ENCODE measurements at regions of chr11 and their contacts with region 1.

Region 1: GRCh38 chr11:128323381-128323780 is 264.0 kb downstream of the ETS1 start:
- DNase-seq: peak in 3 of 5 donors; percentile 37 to 55 (median 51)
- H3K4me3 ChIP-seq: peak overlapping the region; percentile 26
- H3K4me3 Mint-ChIP-seq: peak overlapping the region; percentile 34 to 77 (median 68)
- H3K27ac ChIP-seq: peak overlapping the region; percentile 83
- H3K27ac Mint-ChIP-seq: peak overlapping the region; percentile 88 to 99 (median 96)
- H3K4me1 ChIP-seq: peaks cover 95% of the 10 kb centered on the region
- H3K4me1 Mint-ChIP-seq: peaks cover 82 to 92% (median 88%) of the 10 kb centered on the region in 3 donors
- H3K27me3 ChIP-seq: no peaks in the 10 kb centered on the region
- H3K27me3 Mint-ChIP-seq: no peaks in the 10 kb centered on the region

Region 2: DNA sequence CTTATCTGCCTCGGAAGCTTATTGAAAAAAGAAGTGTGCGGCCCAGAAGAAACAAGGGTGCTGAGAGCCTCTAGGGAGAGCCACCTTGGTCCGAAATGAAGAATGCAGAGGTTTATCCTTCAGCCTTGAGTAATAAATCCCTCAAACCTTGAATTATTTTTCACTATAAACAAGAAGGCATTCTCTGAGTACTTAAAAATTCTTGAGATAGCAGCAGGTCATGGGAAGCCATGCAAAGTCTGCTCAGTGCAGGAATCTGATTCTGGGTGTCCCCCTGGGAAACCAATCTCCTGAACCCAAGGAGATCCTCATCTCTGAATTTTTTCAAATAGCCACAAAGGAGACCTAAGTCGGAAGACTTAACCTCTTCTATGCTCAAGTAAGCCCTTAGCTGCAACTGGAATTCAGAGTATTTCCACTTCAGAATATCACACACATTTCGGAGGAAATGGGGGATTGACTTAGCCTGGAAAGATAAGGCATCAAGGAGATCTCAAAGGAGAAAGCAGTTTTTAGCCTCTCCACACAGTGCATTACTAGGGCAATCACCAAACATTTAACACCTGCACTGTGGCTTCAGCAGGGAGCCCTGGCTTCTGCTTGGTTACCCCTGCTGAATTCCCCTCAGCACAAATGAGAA is 101.0 kb before region 1 on chr11:
- CTCF ChIA-PET with region 1: no interaction called
- POLR2A ChIA-PET with region 1: no interaction called
- DNase-seq: no peak
- H3K4me3 ChIP-seq: no peak overlapping the region
- H3K4me3 Mint-ChIP-seq: no peak overlapping the region
- H3K27ac ChIP-seq: no peak overlapping the region
- H3K27ac Mint-ChIP-seq: no peak overlapping the region
- H3K4me1 ChIP-seq: no peaks in the 10 kb centered on the region
- H3K4me1 Mint-ChIP-seq: peaks cover 4 to 9% (median 8%) of the 10 kb centered on the region in 3 donors
- H3K27me3 ChIP-seq: no peaks in the 10 kb centered on the region
- H3K27me3 Mint-ChIP-seq: no peaks in the 10 kb centered on the region

Region 3: DNA sequence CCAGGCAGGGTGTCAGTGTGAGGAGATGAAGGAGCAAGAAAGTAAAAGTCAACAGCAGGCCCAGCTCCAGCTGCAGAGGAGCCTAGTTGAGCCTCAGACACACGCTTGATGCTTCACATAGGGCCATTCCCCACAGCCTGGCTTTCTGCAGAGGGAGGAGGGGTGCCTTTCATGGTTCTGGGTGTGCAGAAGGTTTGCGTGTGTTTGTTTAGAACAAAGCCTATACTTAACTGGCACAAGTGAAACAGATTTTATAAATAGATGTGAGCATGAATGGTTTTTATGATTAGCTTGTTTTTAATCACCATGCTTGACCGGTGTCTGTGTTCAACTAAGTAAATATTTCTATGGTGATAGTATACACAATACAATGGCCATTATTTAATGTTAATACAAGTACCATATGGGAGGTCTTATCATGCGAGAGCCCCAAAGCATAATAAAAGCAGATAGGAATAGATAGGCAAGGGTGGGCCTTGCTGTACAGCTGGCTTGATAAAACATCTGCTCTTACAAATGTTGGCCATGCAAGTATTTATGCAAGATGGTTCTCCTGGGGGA is 26.2 kb before region 1 on chr11:
- CTCF ChIA-PET with region 1: interaction called, 27 read pairs
- POLR2A ChIA-PET with region 1: interaction called, 10 read pairs
- DNase-seq: peak in 2 of 5 donors; percentile 45
- H3K4me3 ChIP-seq: no peak overlapping the region
- H3K4me3 Mint-ChIP-seq: peak overlapping the region in 4 of 7 donors; percentile 2 to 59 (median 28)
- H3K27ac ChIP-seq: no peak overlapping the region
- H3K27ac Mint-ChIP-seq: peak overlapping the region; percentile 47 to 99 (median 95)
- H3K4me1 ChIP-seq: peaks cover 98% of the 10 kb centered on the region
- H3K4me1 Mint-ChIP-seq: peaks cover 82 to 100% (median 100%) of the 10 kb centered on the region in 3 donors
- H3K27me3 ChIP-seq: no peaks in the 10 kb centered on the region
- H3K27me3 Mint-ChIP-seq: no peaks in the 10 kb centered on the region

Region 4: GRCh38 chr11:128308794-128309193 is 14.6 kb before region 1 on chr11:
- CTCF ChIA-PET with region 1: interaction called, 13 read pairs
- POLR2A ChIA-PET with region 1: interaction called, 17 read pairs
- DNase-seq: no peak
- H3K4me3 ChIP-seq: no peak overlapping the region
- H3K4me3 Mint-ChIP-seq: no peak overlapping the region
- H3K27ac ChIP-seq: no peak overlapping the region
- H3K27ac Mint-ChIP-seq: peak overlapping the region in 5 of 8 donors; percentile 35 to 84 (median 73)
- H3K4me1 ChIP-seq: peaks cover 88% of the 10 kb centered on the region
- H3K4me1 Mint-ChIP-seq: peaks cover 75 to 92% (median 87%) of the 10 kb centered on the region in 3 donors
- H3K27me3 ChIP-seq: no peaks in the 10 kb centered on the region
- H3K27me3 Mint-ChIP-seq: peaks cover 0 to 2% of the 10 kb centered on the region in 2 donors

Region 5: GRCh38 chr11:128472128-128473089 is 149.0 kb after region 1 on chr11:
- CTCF ChIA-PET with region 1: interaction called, 17 read pairs
- POLR2A ChIA-PET with region 1: interaction called, 5 read pairs
- DNase-seq: peak in 3 of 5 donors; percentile 48 to 64 (median 63)
- H3K4me3 ChIP-seq: peak overlapping the region; percentile 69
- H3K4me3 Mint-ChIP-seq: peak overlapping the region; percentile 62 to 86 (median 77)
- H3K27ac ChIP-seq: peak overlapping the region; percentile 56
- H3K27ac Mint-ChIP-seq: peak overlapping the region; percentile 89 to 99 (median 96)
- H3K4me1 ChIP-seq: peaks cover 96% of the 10 kb centered on the region
- H3K4me1 Mint-ChIP-seq: peaks cover 99 to 100% (median 100%) of the 10 kb centered on the region in 3 donors
- H3K27me3 ChIP-seq: no peaks in the 10 kb centered on the region
- H3K27me3 Mint-ChIP-seq: peaks cover 0 to 1% of the 10 kb centered on the region in 2 donors

Region 6: DNA sequence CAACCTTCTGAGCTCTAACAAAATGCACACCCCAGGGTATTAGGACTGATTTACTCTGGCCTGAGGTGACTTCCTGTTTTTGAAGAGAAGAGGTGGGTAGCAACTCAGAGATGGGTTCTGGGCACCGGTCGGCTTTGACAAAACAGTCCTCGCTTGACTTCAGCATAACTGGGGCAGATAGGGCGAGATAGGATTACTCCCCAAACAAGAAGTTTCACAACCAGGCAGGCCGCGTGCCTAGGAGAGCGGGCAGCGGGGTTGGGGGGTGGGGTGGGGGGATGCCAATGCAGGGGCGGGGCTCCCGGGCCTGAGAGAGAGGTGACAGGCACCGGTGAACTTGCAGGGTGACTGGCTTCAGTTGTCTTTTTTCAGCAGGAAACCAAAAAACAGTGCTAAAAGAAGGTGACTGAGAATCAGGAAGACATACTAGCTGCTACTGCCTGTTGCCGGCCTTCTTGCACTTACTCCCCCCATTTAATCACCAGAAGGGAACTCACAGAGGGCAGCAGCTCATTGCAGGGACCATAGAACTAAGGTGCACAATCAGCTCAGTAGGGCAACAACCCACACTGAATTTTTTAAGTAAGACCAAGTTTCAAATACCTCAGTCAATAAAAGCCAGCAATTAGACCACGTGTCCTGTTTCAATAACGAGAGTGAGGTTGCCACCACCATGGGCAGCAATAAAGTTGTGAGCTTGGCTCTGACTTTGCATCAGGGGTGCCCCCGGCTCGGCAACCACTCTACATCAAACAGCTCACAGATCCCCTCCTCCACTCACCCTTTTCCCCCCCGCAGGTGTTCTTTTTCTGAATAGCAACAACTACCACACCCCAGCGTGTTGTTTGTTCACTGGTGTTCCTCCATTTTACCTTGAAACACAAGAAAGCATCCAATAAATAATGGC is 301.1 kb after region 1 on chr11:
- CTCF ChIA-PET with region 1: interaction called, 10 read pairs
- POLR2A ChIA-PET with region 1: no interaction called
- DNase-seq: peak; percentile 55 to 87 (median 71)
- H3K4me3 ChIP-seq: peak overlapping the region; percentile 44
- H3K4me3 Mint-ChIP-seq: peak overlapping the region; percentile 75 to 88 (median 77)
- H3K27ac ChIP-seq: peak overlapping the region; percentile 59
- H3K27ac Mint-ChIP-seq: peak overlapping the region; percentile 93 to 99 (median 98)
- H3K4me1 ChIP-seq: peaks cover 67% of the 10 kb centered on the region
- H3K4me1 Mint-ChIP-seq: peaks cover 90 to 100% (median 99%) of the 10 kb centered on the region in 3 donors
- H3K27me3 ChIP-seq: no peaks in the 10 kb centered on the region
- H3K27me3 Mint-ChIP-seq: peaks cover 0 to 2% of the 10 kb centered on the region in 2 donors